H1 (cell line): ENCODE measurements at regions of chr12 and their contacts with region 1.

Region 1: GRCh38 chr12:3275171-3276041 is 198.2 kb downstream of the TSPAN9 start:
- DNase-seq: peak; percentile 23 to 97
- H3K4me3 ChIP-seq: 0 out of 8 replicates have a peak overlapping the region, but pooled peaks of 1 of the 4 experiments have one; percentile 20
- H3K27ac ChIP-seq: no peak overlapping the region
- H3K4me1 ChIP-seq: peaks cover 0 to 15% (median 7%) of the 10 kb centered on the region in 4 experiments
- H3K27me3 ChIP-seq: no peaks in the 10 kb centered on the region
- CTCF ChIP-seq: peak in 2 of 3 experiments; percentile 95 to 96; a peak in 3 of 4 replicates
- EP300 ChIP-seq: no peak
- POLR2A ChIP-seq: no peak
- RAD21 ChIP-seq: peak; percentile 92 to 96

Region 2: DNA sequence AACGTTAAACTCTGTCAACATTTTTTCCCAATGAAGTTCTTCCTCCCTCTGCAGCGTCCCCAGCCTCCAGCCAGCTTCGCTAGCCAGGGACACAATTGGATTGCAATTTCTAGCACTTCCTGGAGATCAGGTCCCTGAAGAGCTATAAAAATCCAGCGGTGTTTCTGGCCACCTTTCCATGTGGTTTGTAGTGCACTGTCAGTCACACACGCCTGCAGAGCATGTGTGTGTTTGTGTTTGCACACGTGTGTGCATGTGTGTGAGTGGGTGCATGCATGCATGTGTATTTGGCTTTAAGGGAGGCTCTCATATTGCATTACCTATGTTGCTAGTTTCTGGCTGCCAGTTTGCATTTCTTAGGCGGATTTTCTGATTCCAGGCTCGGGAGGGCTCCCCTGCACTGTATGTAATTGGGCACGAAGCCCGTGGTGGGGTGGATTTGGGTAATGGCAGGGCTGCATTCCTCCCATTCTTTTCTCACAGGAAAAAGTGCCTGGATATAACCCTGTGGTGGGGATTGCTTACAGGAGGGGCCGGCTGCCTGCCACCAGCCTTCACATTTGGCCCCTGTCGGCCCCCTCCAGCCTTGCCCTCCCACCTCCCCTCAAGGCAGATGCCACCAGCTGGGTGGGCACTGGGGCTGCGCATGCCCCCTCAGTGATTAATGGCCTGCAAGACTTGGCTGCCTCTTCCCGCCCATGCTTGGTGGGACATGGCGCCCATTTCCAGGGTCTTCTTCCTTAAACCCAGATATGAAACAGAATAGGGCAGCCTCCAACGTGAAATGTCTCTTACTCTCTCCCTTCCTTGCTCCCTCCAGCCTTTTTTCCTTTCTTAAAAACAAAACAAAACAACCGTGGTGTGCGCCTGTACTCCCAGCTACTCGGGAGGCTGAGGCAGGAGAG is 124.2 kb before region 1 on chr12:
- CTCF ChIA-PET with region 1: interaction called, 28 read pairs
- POLR2A ChIA-PET with region 1: no interaction called
- DNase-seq: no peak
- H3K4me3 ChIP-seq: no peak overlapping the region
- H3K27ac ChIP-seq: no peak overlapping the region
- H3K4me1 ChIP-seq: peaks cover 8 to 31% (median 27%) of the 10 kb centered on the region in 4 experiments
- H3K27me3 ChIP-seq: no peaks in the 10 kb centered on the region; a peak in 1 of 7 replicates
- CTCF ChIP-seq: no peak
- EP300 ChIP-seq: no peak
- POLR2A ChIP-seq: no peak
- RAD21 ChIP-seq: no peak; a peak in 1 of 4 replicates

Region 3: GRCh38 chr12:3197131-3197818 is 78.1 kb before region 1 on chr12:
- CTCF ChIA-PET with region 1: interaction called, 361 read pairs
- POLR2A ChIA-PET with region 1: no interaction called
- DNase-seq: no peak
- H3K4me3 ChIP-seq: no peak overlapping the region
- H3K27ac ChIP-seq: no peak overlapping the region
- H3K4me1 ChIP-seq: peaks cover 0 to 15% (median 6%) of the 10 kb centered on the region in 4 experiments; a peak in 6 of 7 replicates
- H3K27me3 ChIP-seq: peaks cover 10 to 34% (median 27%) of the 10 kb centered on the region in 4 experiments
- CTCF ChIP-seq: no peak
- EP300 ChIP-seq: no peak
- POLR2A ChIP-seq: no peak
- RAD21 ChIP-seq: no peak

Region 4: DNA sequence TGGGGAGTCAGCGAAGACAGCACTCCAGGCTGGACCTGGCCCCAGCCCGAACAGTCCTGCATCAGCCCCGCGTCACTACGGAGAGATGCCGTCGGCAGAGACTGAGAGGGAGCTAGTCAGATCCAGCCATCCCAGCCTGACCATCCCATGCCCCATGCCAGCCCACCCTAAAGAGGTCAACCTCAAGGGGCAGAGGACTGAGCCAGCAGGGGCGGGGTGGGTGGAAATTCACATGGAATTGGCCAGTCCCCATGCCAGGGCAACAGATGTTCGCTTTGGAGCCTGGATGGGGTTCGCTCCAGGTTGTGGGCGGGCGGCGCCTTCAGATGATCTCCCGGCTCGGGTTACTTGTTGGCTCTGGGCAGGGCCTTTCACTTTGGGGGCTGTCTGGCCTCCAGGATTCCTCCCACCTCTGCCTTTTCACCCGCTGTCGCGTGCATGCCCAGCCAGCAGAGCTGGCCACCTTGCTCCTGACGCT is 44.0 kb before region 1 on chr12:
- CTCF ChIA-PET with region 1: interaction called, 28 read pairs
- POLR2A ChIA-PET with region 1: interaction called, 4 read pairs
- DNase-seq: peak in 1 of 2 experiments; percentile 81
- H3K4me3 ChIP-seq: peak overlapping the region in 1 of 4 experiments; percentile 31; a peak in 2 of 8 replicates
- H3K27ac ChIP-seq: no peak overlapping the region
- H3K4me1 ChIP-seq: peaks cover 0 to 31% (median 17%) of the 10 kb centered on the region in 4 experiments; a peak in 6 of 7 replicates
- H3K27me3 ChIP-seq: no peaks in the 10 kb centered on the region; a peak in 1 of 7 replicates
- CTCF ChIP-seq: no peak
- EP300 ChIP-seq: no peak
- POLR2A ChIP-seq: no peak
- RAD21 ChIP-seq: no peak

Region 5: DNA sequence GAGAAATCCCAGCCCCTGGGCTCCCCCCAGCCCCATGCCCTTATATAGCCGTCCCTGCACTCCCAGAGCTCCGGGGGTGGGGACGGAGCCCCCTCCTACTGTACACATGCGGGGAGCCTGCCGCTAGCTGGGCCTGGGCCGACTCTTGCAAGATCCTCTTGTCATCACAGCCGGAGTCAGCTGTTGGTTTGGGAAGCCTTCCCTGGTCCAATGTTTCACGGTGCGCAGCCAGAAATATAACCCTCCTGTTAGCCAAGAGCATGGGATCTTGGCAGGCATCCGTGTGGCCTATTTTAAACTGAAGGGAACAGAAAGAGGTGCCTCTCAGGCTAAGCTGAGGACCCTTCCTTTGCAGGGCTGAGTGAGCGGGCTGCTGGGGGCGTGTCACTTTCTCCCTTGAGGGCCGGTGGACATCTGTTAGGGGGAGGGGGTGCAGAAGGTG is 22.9 kb before region 1 on chr12:
- CTCF ChIA-PET with region 1: interaction called, 77 read pairs
- POLR2A ChIA-PET with region 1: no interaction called
- DNase-seq: no peak
- H3K4me3 ChIP-seq: no peak overlapping the region
- H3K27ac ChIP-seq: no peak overlapping the region
- H3K4me1 ChIP-seq: 0 out of 7 replicates have a peak, but pooled peaks cover 0 to 2% (median 0%) of the 10 kb centered on the region in 4 experiments
- H3K27me3 ChIP-seq: no peaks in the 10 kb centered on the region
- CTCF ChIP-seq: no peak
- EP300 ChIP-seq: no peak
- POLR2A ChIP-seq: no peak
- RAD21 ChIP-seq: no peak